H1 (cell line): ENCODE measurements at regions of chr1 and their contacts with region 1.

Region 1: GRCh38 chr1:34597877-34598514 is 156.9 kb upstream of the GJB5 start:
- DNase-seq: peak; percentile 62 to 96
- H3K4me3 ChIP-seq: no peak overlapping the region
- H3K27ac ChIP-seq: no peak overlapping the region
- H3K4me1 ChIP-seq: peaks cover 0 to 4% (median 2%) of the 10 kb centered on the region in 4 experiments; a peak in 2 of 7 replicates
- H3K27me3 ChIP-seq: no peaks in the 10 kb centered on the region
- CTCF ChIP-seq: peak; percentile 89 to 97 (median 96)
- EP300 ChIP-seq: no peak
- POLR2A ChIP-seq: no peak
- RAD21 ChIP-seq: peak; percentile 98 to 99

Region 2: DNA sequence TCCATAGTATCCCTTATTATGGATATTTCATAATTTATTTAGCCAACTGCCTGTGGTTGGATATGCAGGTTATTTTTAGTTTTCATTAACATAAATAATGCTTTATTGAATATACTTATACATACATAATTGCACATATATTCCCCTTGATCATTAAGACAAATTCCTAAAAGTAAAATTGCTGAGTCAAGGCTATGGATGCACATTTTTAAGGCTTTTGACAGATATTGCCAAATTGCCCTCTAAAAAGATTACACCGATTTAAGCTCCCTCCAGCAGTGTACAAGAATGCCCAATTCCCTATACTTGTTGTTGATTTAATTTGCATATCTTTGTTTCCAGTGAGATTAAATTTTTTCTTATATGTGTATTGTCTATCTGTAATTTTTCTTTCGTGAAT is 244.6 kb before region 1 on chr1:
- CTCF ChIA-PET with region 1: no interaction called
- POLR2A ChIA-PET with region 1: no interaction called
- DNase-seq: no peak
- H3K4me3 ChIP-seq: no peak overlapping the region
- H3K27ac ChIP-seq: no peak overlapping the region
- H3K4me1 ChIP-seq: no peaks in the 10 kb centered on the region
- H3K27me3 ChIP-seq: no peaks in the 10 kb centered on the region
- CTCF ChIP-seq: no peak
- EP300 ChIP-seq: no peak
- POLR2A ChIP-seq: no peak
- RAD21 ChIP-seq: no peak

Region 3: GRCh38 chr1:34460193-34460592 is 137.8 kb before region 1 on chr1:
- CTCF ChIA-PET with region 1: interaction called, 54 read pairs
- POLR2A ChIA-PET with region 1: no interaction called
- DNase-seq: peak; percentile 23 to 85
- H3K4me3 ChIP-seq: no peak overlapping the region
- H3K27ac ChIP-seq: no peak overlapping the region
- H3K4me1 ChIP-seq: no peaks in the 10 kb centered on the region
- H3K27me3 ChIP-seq: no peaks in the 10 kb centered on the region
- CTCF ChIP-seq: peak; percentile 71 to 85 (median 85)
- EP300 ChIP-seq: no peak
- POLR2A ChIP-seq: no peak
- RAD21 ChIP-seq: peak; percentile 80 to 85

Region 4: DNA sequence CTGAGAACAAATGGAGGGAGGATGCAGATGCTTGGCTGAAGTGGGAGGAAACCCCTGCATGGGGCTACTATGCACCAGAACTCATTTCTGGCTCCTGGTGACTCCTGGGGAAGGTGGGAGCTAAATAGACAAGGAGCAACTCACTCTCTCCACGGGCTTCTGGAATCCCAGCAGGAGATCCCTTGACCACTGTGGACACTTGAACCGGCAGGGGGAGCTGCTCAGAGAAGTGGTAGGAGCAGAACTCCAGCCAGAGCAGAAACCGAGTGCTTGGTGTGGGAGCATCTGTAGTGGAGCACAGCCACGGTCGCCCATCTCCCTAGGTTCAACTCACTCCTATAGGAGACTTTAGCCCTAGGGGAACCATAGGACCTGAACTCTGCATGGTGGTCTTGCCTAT is 48.8 kb before region 1 on chr1:
- CTCF ChIA-PET with region 1: interaction called, 53 read pairs
- POLR2A ChIA-PET with region 1: no interaction called
- DNase-seq: peak; percentile 13 to 65
- H3K4me3 ChIP-seq: no peak overlapping the region
- H3K27ac ChIP-seq: no peak overlapping the region
- H3K4me1 ChIP-seq: peaks cover 0 to 3% (median 0%) of the 10 kb centered on the region in 4 experiments; a peak in 2 of 7 replicates
- H3K27me3 ChIP-seq: no peaks in the 10 kb centered on the region
- CTCF ChIP-seq: peak; percentile 55 to 66 (median 58)
- EP300 ChIP-seq: no peak
- POLR2A ChIP-seq: no peak
- RAD21 ChIP-seq: peak; percentile 41 to 59

Region 5: GRCh38 chr1:34582356-34582755 is 15.6 kb before region 1 on chr1:
- CTCF ChIA-PET with region 1: interaction called, 34 read pairs
- POLR2A ChIA-PET with region 1: no interaction called
- DNase-seq: no peak
- H3K4me3 ChIP-seq: no peak overlapping the region
- H3K27ac ChIP-seq: no peak overlapping the region
- H3K4me1 ChIP-seq: no peaks in the 10 kb centered on the region
- H3K27me3 ChIP-seq: no peaks in the 10 kb centered on the region; a peak in 1 of 7 replicates
- CTCF ChIP-seq: no peak
- EP300 ChIP-seq: no peak
- POLR2A ChIP-seq: no peak
- RAD21 ChIP-seq: no peak

Region 6: DNA sequence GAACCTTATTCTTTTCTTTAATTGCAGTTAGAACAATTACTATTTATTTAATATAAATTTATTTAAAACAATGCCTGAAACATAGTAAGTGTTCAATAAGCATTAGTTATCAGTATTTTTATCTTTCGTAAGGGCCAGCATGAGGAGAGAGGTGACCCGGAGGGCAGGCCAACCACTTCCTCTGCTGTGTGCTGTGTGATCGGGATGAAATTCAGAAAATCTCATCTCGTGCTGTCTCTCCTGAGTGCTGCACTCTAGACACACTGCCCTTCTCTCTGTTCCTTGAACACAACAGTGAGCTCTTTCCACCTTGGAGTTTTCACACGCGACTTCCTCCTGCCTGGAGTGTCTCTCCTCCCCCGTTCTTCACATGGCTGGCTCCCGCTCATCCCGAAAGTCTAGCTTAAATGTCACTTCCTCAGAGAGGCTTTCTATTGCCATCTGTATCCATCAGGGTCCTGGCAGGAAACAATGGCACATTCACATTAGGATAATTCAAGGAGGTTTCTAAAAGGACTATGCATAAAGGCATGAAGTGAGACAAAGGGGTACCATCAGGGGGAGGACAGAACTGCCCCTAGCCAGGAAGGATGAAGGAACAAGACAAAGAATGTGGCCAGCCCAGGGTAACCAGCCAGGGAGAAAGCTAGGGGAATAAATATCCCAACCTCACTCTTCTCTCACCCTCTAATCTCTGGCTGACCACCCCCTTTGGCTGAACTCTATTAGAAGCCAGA is 14.3 kb after region 1 on chr1:
- CTCF ChIA-PET with region 1: interaction called, 18 read pairs
- POLR2A ChIA-PET with region 1: no interaction called
- DNase-seq: no peak
- H3K4me3 ChIP-seq: no peak overlapping the region
- H3K27ac ChIP-seq: no peak overlapping the region
- H3K4me1 ChIP-seq: peaks cover 0 to 3% (median 0%) of the 10 kb centered on the region in 4 experiments; a peak in 2 of 7 replicates
- H3K27me3 ChIP-seq: peaks cover 0 to 2% (median 0%) of the 10 kb centered on the region in 4 experiments; a peak in 1 of 7 replicates
- CTCF ChIP-seq: no peak
- EP300 ChIP-seq: no peak
- POLR2A ChIP-seq: no peak
- RAD21 ChIP-seq: no peak

Region 7: DNA sequence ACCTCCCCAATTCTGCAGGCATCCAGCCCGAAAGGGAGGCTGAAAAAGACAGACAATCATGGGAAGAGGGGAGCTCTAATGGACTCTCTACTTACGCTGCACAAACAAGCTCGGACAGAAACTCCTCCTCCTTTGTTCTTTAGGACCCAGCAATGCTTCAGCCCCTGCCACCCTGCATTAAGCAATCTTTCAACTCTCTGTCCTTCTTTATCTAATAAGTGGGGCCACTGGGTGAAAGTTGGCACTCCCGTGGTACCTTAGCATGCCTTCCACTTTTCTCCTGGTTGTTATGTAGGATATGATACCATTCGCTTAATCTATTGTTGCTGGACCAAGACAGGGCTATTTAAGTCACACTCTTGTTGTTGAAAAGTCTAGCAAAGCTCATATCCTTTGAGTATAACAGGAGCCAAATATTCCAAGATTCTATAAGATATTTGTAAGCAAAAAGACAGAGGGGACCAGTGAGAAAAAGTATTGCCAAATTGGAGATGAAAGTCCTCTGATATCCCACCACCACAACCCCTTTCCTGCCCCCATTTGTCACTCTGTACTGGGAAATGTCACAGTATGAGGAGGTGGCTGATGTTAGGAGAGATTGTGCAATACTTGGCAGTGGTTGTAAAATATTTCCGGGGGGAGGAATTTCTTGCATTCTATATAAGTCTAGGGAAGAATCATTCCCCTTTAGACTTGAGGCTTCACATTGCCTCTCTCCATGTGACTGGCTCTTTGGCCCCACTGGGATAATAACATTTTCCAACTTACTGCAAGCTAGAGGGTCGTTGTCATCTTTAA is 19.5 kb after region 1 on chr1:
- CTCF ChIA-PET with region 1: interaction called, 18 read pairs
- POLR2A ChIA-PET with region 1: no interaction called
- DNase-seq: no peak
- H3K4me3 ChIP-seq: no peak overlapping the region
- H3K27ac ChIP-seq: no peak overlapping the region
- H3K4me1 ChIP-seq: no peaks in the 10 kb centered on the region
- H3K27me3 ChIP-seq: no peaks in the 10 kb centered on the region; a peak in 2 of 7 replicates
- CTCF ChIP-seq: no peak
- EP300 ChIP-seq: no peak
- POLR2A ChIP-seq: no peak
- RAD21 ChIP-seq: no peak